ENCODE measurements at regions of chr11 and their contacts with region 1.

Region 1: DNA sequence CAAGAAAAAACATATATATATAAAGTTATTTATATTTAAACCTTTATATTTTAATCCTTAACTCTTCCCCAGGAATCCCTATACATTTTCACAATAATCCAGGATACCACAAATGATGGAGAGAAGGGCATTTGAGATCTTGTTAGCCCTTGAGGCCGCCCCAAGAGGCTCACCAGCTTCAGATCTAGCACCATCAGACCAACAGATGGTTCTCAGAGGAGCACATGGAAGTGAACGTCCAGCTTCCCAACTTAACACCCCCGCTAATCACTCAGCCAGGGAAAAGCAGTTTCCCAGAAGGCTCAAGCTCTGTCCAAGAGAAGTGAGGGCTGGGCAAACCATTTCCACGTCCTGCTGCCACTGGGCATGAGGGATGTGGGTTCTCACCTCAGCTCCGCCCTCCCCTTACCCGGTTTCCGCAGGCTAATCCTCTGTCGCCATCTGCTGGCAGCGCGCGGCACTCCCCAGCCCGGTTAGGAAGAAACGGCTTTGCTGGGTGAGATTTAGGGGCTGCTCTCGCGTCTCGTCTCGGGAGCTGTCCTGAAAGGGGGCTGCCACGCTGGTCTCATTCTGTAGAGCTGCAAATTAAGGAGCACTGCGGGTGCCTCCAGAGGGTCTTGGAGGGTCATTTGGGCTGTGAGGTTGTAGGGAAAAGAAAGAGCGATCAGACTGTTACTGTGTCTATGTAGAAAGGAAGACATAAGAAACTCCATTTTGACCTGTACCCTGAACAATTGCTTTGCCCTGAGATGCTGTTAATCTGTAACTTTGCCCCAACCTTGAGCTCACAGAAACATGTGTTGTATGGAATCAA is 6.8 kb upstream of the FAM111A start:
- DNase-seq: no peak
- H3K4me3 ChIP-seq: no peak overlapping the region
- H3K27me3 ChIP-seq: no peaks in the 10 kb centered on the region
- CTCF ChIP-seq: peak; percentile 100

Region 2: DNA sequence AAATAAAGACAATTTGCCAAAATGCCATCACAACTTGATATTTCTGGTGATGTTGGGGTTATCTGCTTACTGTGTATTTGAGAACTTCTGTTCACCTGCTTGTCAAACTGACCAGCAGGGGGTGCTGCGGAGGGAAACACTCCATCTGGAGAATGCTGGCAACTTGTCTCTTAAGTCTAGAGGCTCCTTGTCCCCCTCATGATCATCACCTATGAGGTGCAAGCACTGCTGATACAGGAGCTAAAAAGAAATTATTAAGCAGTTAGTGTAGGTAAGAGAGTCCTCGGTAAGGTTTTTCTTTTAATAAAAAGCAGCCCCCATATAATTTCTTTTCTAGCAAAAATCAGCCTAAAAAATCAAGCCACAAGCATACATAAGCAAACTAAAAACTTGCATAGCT is 82.5 kb before region 1 on chr11:
- CTCF ChIA-PET with region 1: interaction called, 10 read pairs
- POLR2A ChIA-PET with region 1: no interaction called
- DNase-seq: no peak
- H3K4me3 ChIP-seq: no peak overlapping the region
- H3K27me3 ChIP-seq: 0 out of 2 replicates have a peak, but pooled peaks cover 2% of the 10 kb centered on the region
- CTCF ChIP-seq: peak; percentile 75

Region 3: GRCh38 chr11:59097113-59097708 is 38.6 kb before region 1 on chr11:
- CTCF ChIA-PET with region 1: interaction called, 44 read pairs
- POLR2A ChIA-PET with region 1: no interaction called
- DNase-seq: no peak
- H3K4me3 ChIP-seq: no peak overlapping the region
- H3K27me3 ChIP-seq: no peaks in the 10 kb centered on the region; the same call in 1 of the 2 replicates
- CTCF ChIP-seq: peak; percentile 80

Region 4: GRCh38 chr11:59106363-59107336 is 29.2 kb before region 1 on chr11 and contains the start of gene FAM111B:
- CTCF ChIA-PET with region 1: interaction called, 35 read pairs
- POLR2A ChIA-PET with region 1: no interaction called
- DNase-seq: peak; percentile 67
- H3K4me3 ChIP-seq: peak within 1 kb of the TSS; percentile 58
- H3K27me3 ChIP-seq: no peaks in the 10 kb centered on the region
- CTCF ChIP-seq: peak; percentile 32
- polyA plus RNA-seq, gene FAM111B: 0.76 and 1.9 TPM in 2 replicates

Region 5: DNA sequence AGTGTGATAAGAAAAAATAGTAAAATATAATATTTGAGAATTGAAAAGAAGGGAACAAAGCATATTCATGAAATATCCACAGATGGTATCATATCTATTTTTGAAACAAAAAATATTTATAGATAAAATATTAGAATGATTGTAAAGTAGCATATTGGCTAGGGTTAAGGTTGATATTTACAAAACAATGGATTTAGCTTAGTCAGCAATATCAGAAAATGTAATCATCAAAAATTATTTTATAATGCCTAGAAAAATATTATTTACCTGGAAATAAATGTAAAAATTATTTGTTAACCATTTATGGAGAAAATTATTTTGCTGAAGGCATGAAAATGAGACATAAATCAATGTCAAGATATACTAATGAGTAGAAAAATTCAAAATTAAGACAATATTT is 16.0 kb before region 1 on chr11:
- CTCF ChIA-PET with region 1: interaction called, 15 read pairs
- POLR2A ChIA-PET with region 1: no interaction called
- DNase-seq: no peak
- H3K4me3 ChIP-seq: no peak overlapping the region
- H3K27me3 ChIP-seq: no peaks in the 10 kb centered on the region
- CTCF ChIP-seq: no peak

Region 6: DNA sequence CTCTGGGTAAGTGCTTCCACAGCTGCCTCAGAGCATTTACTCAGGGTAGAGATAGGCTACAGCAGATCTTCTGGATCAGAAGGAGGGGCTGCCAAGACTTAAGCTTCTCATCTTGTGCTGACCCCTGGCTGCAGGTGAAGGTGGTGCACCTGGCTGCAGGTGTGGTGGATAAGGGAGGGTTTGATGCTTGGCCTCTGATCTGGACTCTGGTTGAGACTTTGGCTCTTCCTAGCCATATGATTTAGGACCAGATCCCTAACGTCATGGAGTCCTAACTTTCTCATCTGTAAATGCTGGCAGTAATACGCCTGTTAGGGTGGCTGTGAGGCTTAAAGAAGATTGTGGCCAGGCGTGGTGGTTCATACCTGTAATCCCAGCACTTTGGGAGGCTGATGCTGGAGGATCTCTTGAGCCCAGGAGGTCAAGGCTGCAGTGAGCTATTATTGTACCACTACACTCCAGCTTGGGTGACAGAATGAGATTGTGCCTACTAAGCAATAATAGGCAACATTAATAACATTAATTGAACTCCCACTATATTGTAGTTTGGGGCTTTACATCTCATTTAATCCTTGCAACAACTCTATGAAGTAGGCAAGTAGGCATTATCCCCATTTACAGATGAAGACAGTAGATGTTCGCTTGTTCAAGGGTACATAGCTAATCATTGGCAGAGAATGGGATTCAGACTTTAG is 46.7 kb after region 1 on chr11:
- CTCF ChIA-PET with region 1: no interaction called
- POLR2A ChIA-PET with region 1: no interaction called
- DNase-seq: no peak
- H3K4me3 ChIP-seq: no peak overlapping the region
- H3K27me3 ChIP-seq: no peaks in the 10 kb centered on the region; the same call in 1 of the 2 replicates
- CTCF ChIP-seq: no peak